RWPE1 (cell line): ENCODE measurements at regions of chr12 and their contacts with region 1.

Region 1: GRCh38 chr12:4037747-4038312 is 164.6 kb upstream of the PARP11 start:
- DNase-seq: peak; percentile 39
- H3K27ac ChIP-seq: no peak overlapping the region
- CTCF ChIP-seq: peak; percentile 44; the same call in 1 of the 2 replicates

Region 2: DNA sequence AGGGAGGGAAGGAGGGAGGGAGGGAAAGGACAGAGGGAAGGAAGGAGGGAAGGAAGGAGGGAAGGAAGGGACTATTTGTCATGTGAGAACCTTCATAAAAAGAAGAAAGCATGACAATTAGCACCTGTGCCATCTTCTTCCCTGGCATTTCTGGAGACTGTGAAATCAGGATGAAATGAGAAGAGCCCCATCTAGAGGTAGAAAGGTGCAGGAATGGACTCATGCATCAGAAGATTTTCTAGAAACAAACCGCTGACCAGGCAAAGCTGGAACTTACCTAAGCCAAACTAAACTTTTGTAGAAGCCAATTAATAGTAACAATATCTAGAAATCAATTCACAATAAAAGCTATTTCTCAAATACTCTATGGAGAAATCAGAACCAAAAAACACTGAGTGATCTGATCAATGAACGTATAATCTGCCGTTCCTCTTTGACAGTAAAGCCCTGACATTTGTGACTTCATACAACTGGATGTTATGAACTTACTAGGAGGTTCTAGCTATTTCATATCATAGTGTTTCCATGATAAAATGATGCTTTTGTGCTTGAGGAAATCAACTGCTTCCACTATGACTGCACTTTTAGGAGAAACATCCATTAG is 260.5 kb before region 1 on chr12:
- CTCF ChIA-PET with region 1: no interaction called
- POLR2A ChIA-PET with region 1: no interaction called
- DNase-seq: peak; percentile 42
- H3K27ac ChIP-seq: no peak overlapping the region
- CTCF ChIP-seq: peak; percentile 38

Region 3: GRCh38 chr12:3885277-3886094 is 152.3 kb before region 1 on chr12:
- CTCF ChIA-PET with region 1: interaction called, 30 read pairs
- POLR2A ChIA-PET with region 1: no interaction called
- DNase-seq: peak; percentile 11
- H3K27ac ChIP-seq: no peak overlapping the region
- CTCF ChIP-seq: peak; percentile 66

Region 4: GRCh38 chr12:3990501-3991280 is 47.1 kb before region 1 on chr12:
- CTCF ChIA-PET with region 1: interaction called, 10 read pairs
- POLR2A ChIA-PET with region 1: no interaction called
- DNase-seq: no peak
- H3K27ac ChIP-seq: no peak overlapping the region
- CTCF ChIP-seq: no peak

Region 5: GRCh38 chr12:3998968-3999826 is 38.6 kb before region 1 on chr12:
- CTCF ChIA-PET with region 1: interaction called, 16 read pairs
- POLR2A ChIA-PET with region 1: no interaction called
- DNase-seq: peak; percentile 49
- H3K27ac ChIP-seq: peak overlapping the region; percentile 49; the same call in 1 of the 2 replicates
- CTCF ChIP-seq: no peak

Region 6: GRCh38 chr12:4059898-4060568 is 22.2 kb after region 1 on chr12:
- CTCF ChIA-PET with region 1: no interaction called
- POLR2A ChIA-PET with region 1: no interaction called
- DNase-seq: no peak
- H3K27ac ChIP-seq: no peak overlapping the region
- CTCF ChIP-seq: no peak